Thyroid gland (tissue), 4 donors: ENCODE measurements at regions of chr5 and their contacts with region 1.

Region 1: DNA sequence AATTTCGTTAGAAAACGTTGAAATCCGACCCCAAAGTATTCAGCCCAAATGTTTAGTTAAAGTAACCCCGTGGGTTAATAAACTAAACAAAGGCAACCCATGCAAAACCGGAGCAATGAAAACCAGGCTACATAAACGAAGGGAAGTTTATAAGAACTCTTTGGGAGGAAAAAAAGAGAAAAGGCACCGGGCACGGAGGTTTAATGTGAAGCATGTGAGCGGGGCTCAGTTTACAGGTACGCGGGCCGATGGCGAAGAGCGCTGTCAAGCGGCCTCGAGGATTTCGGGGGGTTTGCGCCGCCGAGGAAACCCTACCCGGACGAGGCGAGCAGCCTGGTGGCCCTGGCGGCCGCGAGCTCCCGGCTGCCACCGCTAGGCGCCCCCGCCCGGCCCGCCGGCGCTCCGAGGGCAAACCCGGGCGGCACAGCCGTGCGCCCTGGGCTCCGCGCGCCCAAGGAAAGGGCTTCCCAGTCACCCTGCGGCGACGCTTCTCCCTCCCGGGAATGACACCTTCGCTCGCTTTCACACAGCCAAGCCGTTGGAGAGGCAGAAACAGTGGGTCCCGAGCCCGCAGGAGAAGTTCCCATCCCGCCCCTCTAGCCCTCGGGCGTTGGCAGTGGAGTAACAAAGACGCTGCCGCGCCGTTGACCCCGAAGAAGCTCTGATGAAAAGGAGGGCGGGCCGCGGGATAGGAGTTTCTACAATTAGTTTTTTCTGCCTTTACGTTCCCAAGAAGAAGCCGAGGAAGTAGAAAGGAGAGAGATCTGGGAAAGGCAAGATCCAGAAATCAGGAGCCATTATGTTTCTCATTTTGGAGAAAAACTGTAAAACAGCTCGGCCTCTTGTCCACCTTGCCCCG is 126.0 kb downstream of the TMEM174 start:
- DNase-seq: no peak
- H3K4me3 ChIP-seq: no peak overlapping the region
- H3K27ac ChIP-seq: no peak overlapping the region
- H3K4me1 ChIP-seq: peaks cover 20 to 35% of the 10 kb centered on the region in 2 donors
- H3K27me3 ChIP-seq: peaks cover 58% of the 10 kb centered on the region
- CTCF ChIP-seq: peak in 2 of 6 experiments; percentile 13 to 19
- POLR2A ChIP-seq: no peak

Region 2: DNA sequence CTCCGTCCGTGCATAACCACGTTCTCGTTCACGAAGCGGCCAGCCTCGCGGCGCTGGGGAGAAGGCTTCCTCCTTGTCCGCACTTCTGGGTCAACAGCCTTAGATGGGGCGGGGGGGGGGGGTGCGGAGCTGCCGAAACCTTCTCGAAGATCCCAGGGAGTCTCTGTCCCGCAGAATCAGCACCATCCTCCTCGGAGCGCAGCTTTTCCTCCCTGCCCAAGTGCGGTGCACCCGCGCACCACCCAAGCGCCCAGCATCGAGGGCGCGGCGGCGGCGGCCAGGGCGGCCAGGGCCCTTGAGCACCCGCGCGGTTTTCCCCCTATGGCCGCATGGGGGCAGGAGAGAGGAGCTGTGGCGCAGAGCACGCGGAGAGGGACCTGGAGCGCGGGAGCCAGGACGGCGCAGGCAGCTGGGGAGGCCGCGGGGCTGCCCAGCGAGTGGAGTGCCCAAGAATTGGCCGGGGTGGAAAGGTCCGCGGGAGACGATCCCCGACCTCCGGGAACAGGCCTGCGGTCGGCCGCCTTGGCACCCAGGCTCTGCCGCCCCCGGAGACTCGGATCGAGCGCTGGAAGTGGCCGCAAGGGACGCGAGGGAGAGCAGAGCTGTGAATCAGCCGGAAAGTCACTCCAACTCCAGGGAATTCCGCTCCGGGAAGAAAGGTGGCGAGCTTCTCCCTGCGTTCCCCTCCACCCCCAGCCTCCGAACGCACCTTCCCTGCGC is 83.0 kb before region 1 on chr5:
- intact Hi-C with region 1: loop called (anchors 5 kb)
- DNase-seq: peak; percentile 78 to 82
- H3K4me3 ChIP-seq: peak overlapping the region in 1 of 3 donors; percentile 3
- H3K27ac ChIP-seq: no peak overlapping the region
- H3K4me1 ChIP-seq: peaks cover 0 to 17% of the 10 kb centered on the region in 2 donors
- H3K27me3 ChIP-seq: peaks cover 10% of the 10 kb centered on the region
- CTCF ChIP-seq: peak; percentile 68 to 94 (median 88)
- POLR2A ChIP-seq: no peak

Region 3: GRCh38 chr5:73233347-73234200 is 65.4 kb before region 1 on chr5:
- intact Hi-C with region 1: loop called (anchors 5 kb)
- DNase-seq: no peak
- H3K4me3 ChIP-seq: peak overlapping the region in 1 of 3 donors; percentile 21
- H3K27ac ChIP-seq: no peak overlapping the region
- H3K4me1 ChIP-seq: peaks cover 16 to 24% of the 10 kb centered on the region in 2 donors
- H3K27me3 ChIP-seq: peaks cover 51% of the 10 kb centered on the region
- CTCF ChIP-seq: no peak
- POLR2A ChIP-seq: no peak

Region 4: GRCh38 chr5:73448463-73449136 is 149.6 kb after region 1 on chr5 and contains the start of gene FOXD1:
- intact Hi-C with region 1: loop called (anchors 5 kb)
- DNase-seq: peak; percentile 29 to 37
- H3K4me3 ChIP-seq: peak within 1 kb of the TSS in 1 of 3 donors; percentile 18
- H3K27ac ChIP-seq: no peak within 1 kb of the TSS
- H3K4me1 ChIP-seq: peaks cover 10 to 16% of the 10 kb centered on the region in 2 donors
- H3K27me3 ChIP-seq: peaks cover 79% of the 10 kb centered on the region
- CTCF ChIP-seq: no peak
- POLR2A ChIP-seq: no peak
- total RNA-seq, gene FOXD1: 0.38 to 1.6 (median 1.2) TPM in 3 of 4 donors, not detected in the other